CD14-positive monocyte (primary cell): ENCODE measurements at regions of chr12 and their contacts with region 1.

Region 1: DNA sequence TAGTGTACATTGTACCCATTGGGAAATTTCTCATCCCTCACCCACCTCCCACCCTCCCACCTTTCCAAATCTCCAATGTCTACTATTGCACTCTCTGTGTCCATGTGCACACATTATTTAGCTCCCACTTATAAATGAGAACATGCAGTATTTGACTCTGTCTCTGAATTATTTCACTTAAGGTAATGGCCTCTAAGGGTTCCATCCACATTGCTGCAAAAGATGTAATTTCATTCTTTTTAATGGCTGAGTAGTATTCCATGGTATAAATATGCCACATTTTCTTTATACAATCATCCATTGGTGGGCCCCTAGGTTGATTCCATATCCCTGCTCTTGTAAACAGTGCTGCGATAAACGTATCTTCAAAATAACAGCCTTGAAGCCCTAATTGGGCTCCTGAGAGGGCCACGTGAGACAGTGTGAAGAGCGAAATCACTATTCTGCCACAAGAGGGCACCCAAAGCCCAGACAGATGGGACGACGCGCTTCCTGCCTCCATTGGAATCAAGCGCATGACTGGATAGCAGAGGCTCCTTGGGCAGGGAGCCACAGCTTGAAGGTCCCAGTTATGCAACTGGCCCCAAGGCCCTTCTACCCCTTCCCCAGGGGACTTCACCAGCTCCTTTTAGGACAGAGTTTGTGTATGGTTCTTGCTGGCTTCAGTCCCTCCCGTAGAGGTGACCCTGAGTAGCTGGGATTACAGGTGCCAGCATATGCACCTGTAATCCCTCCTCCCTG is 21.3 kb upstream of the CD27 start:
- DNase-seq: peak; percentile 90 to 94 (median 93)
- H3K4me3 ChIP-seq: no peak overlapping the region
- H3K4me3 Mint-ChIP-seq: no peak overlapping the region
- H3K27ac ChIP-seq: peak overlapping the region in 1 of 2 donors; percentile 15
- H3K27ac Mint-ChIP-seq: peak overlapping the region in 4 of 7 donors; percentile 7 to 52 (median 26)
- H3K4me1 ChIP-seq: peaks cover 20 to 29% of the 10 kb centered on the region in 2 donors
- H3K4me1 Mint-ChIP-seq: peaks cover 22% of the 10 kb centered on the region
- H3K27me3 ChIP-seq: no peaks in the 10 kb centered on the region
- H3K27me3 Mint-ChIP-seq: peaks cover 0 to 4% (median 0%) of the 10 kb centered on the region in 3 donors
- CTCF ChIP-seq: peak; percentile 85

Region 2: DNA sequence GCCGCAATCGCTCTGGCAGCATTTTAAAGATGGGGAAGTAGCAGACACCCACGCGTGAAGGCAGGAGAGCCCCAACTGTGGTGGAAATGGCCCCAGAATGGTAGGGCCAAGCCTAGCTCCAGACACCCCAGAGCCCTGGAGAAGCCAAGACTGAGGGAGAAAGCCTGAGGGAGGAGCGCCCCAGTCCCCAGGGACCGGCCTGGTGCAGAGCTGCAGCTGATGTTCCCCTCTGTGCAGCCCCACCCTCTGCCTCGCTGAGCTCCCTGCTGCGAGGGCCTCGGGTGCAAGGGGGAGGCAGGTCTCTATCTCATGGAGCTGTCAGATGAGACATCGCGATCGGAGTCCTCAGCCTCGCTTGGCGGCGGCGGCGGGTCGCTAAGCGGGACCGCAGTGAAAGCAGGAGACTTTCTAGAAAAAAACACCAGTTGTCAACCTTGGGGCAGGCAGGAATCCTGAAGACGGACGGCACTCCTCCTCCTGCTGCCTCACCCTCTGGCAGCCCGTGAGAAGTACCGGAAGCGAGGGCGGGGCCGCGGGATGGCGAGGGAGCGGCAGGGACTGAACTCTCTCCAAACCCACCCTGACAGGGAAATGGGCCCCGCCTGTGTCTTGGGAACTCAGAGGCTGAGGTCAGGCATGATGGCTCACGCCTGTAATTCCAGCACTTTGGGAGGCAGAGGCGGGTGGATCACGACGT is 116.9 kb after region 1 on chr12:
- intact Hi-C with region 1: loop called (anchors 2 to 5 kb)
- DNase-seq: peak in 2 of 3 donors; percentile 62 to 69
- H3K4me3 ChIP-seq: peak overlapping the region in 1 of 3 experiments; percentile 23
- H3K4me3 Mint-ChIP-seq: peak overlapping the region; percentile 50 to 83
- H3K27ac ChIP-seq: peak overlapping the region; percentile 29 to 46
- H3K27ac Mint-ChIP-seq: peak overlapping the region; percentile 65 to 90 (median 80)
- H3K4me1 ChIP-seq: peaks cover 55 to 71% of the 10 kb centered on the region in 2 donors
- H3K4me1 Mint-ChIP-seq: peaks cover 70% of the 10 kb centered on the region
- H3K27me3 ChIP-seq: no peaks in the 10 kb centered on the region
- H3K27me3 Mint-ChIP-seq: peaks cover 0 to 2% (median 2%) of the 10 kb centered on the region in 3 donors
- CTCF ChIP-seq: no peak